ENCODE measurements at regions of chr4 and their contacts with region 1.

Region 1: GRCh38 chr4:3352941-3353594 is 60.2 kb downstream of the RGS12 start:
- DNase-seq: no peak
- ATAC-seq: no peak

Region 2: GRCh38 chr4:3368841-3369760 is 16.0 kb after region 1 on chr4:
- intact Hi-C with region 1: loop called (anchors 1 kb)
- DNase-seq: no peak
- ATAC-seq: no peak

Measured in Right ventricle myocardium inferior (tissue), 1 donor.